ENCODE measurements at regions of chr4 and their contacts with region 1.

Region 1: GRCh38 chr4:38523524-38524448 is 140.2 kb upstream of the KLF3 start:
- DNase-seq: peak; percentile 52 to 73 (median 63)
- H3K4me3 ChIP-seq: peak overlapping the region; percentile 3 to 18
- H3K4me3 Mint-ChIP-seq: peak overlapping the region; percentile 80 to 92 (median 88)
- H3K27ac ChIP-seq: peak overlapping the region; percentile 6
- H3K27ac Mint-ChIP-seq: peak overlapping the region; percentile 77 to 93 (median 88)
- H3K4me1 ChIP-seq: peaks cover 30% of the 10 kb centered on the region
- H3K4me1 Mint-ChIP-seq: peaks cover 23 to 53% (median 39%) of the 10 kb centered on the region in 4 donors
- H3K27me3 ChIP-seq: no peaks in the 10 kb centered on the region
- H3K27me3 Mint-ChIP-seq: no peaks in the 10 kb centered on the region

Region 2: DNA sequence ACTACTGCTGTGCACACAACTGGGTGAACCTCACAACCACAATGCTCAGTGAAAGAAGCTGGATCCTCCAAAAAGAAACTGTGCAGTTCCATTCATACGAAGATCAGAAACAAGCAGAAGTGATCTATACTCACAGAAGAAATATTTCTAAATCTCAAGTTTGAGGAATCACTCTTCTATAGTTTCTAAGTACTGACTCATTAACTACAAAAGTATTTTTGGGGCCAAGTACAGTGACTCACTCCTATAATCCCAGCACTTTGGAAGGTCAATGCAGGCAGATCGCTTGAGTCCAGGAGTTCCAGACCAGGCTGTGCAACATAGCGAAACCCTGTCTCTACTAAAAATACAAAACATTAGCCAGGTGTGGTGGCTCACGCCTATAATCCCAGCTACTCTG is 786.3 kb before region 1 on chr4:
- CTCF ChIA-PET with region 1: no interaction called
- POLR2A ChIA-PET with region 1: no interaction called
- intact Hi-C with region 1: no loop called
- DNase-seq: no peak
- H3K4me3 ChIP-seq: no peak overlapping the region
- H3K4me3 Mint-ChIP-seq: no peak overlapping the region
- H3K27ac ChIP-seq: no peak overlapping the region
- H3K27ac Mint-ChIP-seq: no peak overlapping the region
- H3K4me1 ChIP-seq: no peaks in the 10 kb centered on the region
- H3K4me1 Mint-ChIP-seq: no peaks in the 10 kb centered on the region
- H3K27me3 ChIP-seq: no peaks in the 10 kb centered on the region
- H3K27me3 Mint-ChIP-seq: peaks cover 2 to 6% of the 10 kb centered on the region in 2 donors

Region 3: GRCh38 chr4:38582889-38583470 is 59.2 kb after region 1 on chr4:
- CTCF ChIA-PET with region 1: no interaction called
- POLR2A ChIA-PET with region 1: no interaction called
- intact Hi-C with region 1: loop called (anchors 5 kb)
- DNase-seq: peak; percentile 23 to 50 (median 35)
- H3K4me3 ChIP-seq: no peak overlapping the region
- H3K4me3 Mint-ChIP-seq: peak overlapping the region in 7 of 8 donors; percentile 6 to 73 (median 43)
- H3K27ac ChIP-seq: no peak overlapping the region
- H3K27ac Mint-ChIP-seq: peak overlapping the region; percentile 1 to 94 (median 81)
- H3K4me1 ChIP-seq: peaks cover 21% of the 10 kb centered on the region
- H3K4me1 Mint-ChIP-seq: peaks cover 11 to 44% (median 26%) of the 10 kb centered on the region in 4 donors
- H3K27me3 ChIP-seq: no peaks in the 10 kb centered on the region
- H3K27me3 Mint-ChIP-seq: no peaks in the 10 kb centered on the region

Region 4: GRCh38 chr4:38728631-38729144 is 204.9 kb after region 1 on chr4:
- CTCF ChIA-PET with region 1: no interaction called
- POLR2A ChIA-PET with region 1: no interaction called
- intact Hi-C with region 1: no loop called
- DNase-seq: no peak
- H3K4me3 ChIP-seq: no peak overlapping the region
- H3K4me3 Mint-ChIP-seq: no peak overlapping the region
- H3K27ac ChIP-seq: no peak overlapping the region
- H3K27ac Mint-ChIP-seq: peak overlapping the region in 3 of 7 donors; percentile 9 to 52 (median 12)
- H3K4me1 ChIP-seq: peaks cover 28% of the 10 kb centered on the region
- H3K4me1 Mint-ChIP-seq: peaks cover 13 to 31% (median 21%) of the 10 kb centered on the region in 4 donors
- H3K27me3 ChIP-seq: no peaks in the 10 kb centered on the region
- H3K27me3 Mint-ChIP-seq: no peaks in the 10 kb centered on the region